ENCODE measurements at regions of chr1 and their contacts with region 1.

Region 1: GRCh38 chr1:1399187-1399871 is at the start of gene CCNL2:
- DNase-seq: peak; percentile 99 to 100 (median 99)
- ATAC-seq: peak; percentile 95 to 99 (median 96)
- H3K4me3 ChIP-seq: peak within 1 kb of the TSS; percentile 76 to 100 (median 98)
- H3K27ac ChIP-seq: peak within 1 kb of the TSS; percentile 78 to 97 (median 92)
- H3K4me1 ChIP-seq: peaks cover 5 to 53% (median 37%) of the 10 kb centered on the region in 12 donors
- H3K27me3 ChIP-seq: no peaks in the 10 kb centered on the region
- CTCF ChIP-seq: peak; percentile 35 to 79 (median 60)
- POLR2A ChIP-seq: peak in 1 of 2 donors; percentile 80
- total RNA-seq, gene CCNL2: 35.4 to 66.5 (median 50.7) TPM

Region 2: GRCh38 chr1:1150100-1150499 is 249.2 kb before region 1 on chr1:
- intact Hi-C with region 1: no loop called
- DNase-seq: no peak
- ATAC-seq: no peak
- H3K4me3 ChIP-seq: no peak overlapping the region
- H3K27ac ChIP-seq: no peak overlapping the region
- H3K4me1 ChIP-seq: no peaks in the 10 kb centered on the region
- H3K27me3 ChIP-seq: no peaks in the 10 kb centered on the region
- CTCF ChIP-seq: no peak
- POLR2A ChIP-seq: no peak

Region 3: DNA sequence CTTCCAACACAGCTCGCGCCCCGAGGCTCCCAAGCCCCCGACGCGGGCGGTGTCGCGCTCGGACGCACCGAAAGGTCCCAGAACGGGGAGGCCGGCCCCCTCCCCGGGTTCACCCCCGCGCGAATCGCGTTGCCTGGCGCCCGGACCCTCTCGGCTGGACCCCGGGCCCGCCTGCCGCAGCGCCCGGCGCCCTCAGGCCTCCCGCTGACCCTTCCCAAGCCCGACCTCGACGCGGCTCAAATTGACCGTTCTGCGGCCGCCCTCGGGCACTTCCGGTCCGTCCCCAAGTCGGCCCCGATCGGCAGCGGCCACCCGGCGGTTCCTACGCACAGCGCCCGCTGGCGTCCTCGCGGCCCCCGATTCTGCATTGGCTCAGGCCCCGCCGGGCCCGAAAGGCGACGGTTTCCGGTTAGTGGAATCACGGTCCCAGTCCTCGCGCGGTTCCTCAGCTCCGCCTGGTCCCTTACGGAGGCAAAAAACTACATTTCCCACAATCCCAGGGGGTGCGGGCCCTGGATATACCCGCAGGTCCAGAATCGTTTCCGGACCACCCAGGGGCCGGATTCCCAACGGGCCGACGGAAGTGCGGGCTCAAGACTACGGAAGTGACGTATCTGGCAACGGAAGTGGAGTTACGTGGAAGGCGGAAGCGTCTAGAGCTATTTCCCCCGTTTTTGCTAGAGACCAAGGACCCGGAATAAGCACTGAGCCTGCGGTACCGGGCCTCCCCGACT is 24.2 kb before region 1 on chr1 and contains the start of gene AURKAIP1:
- intact Hi-C with region 1: loop called in 1 of 10 experiments (anchors 1 kb)
- DNase-seq: peak; percentile 98 to 99 (median 99)
- ATAC-seq: peak; percentile 95 to 98 (median 96)
- H3K4me3 ChIP-seq: peak within 1 kb of the TSS; percentile 78 to 100 (median 94)
- H3K27ac ChIP-seq: peak within 1 kb of the TSS; percentile 82 to 99 (median 96)
- H3K4me1 ChIP-seq: peaks cover 10 to 42% (median 33%) of the 10 kb centered on the region in 12 donors
- H3K27me3 ChIP-seq: no peaks in the 10 kb centered on the region
- CTCF ChIP-seq: peak in 6 of 12 donors; percentile 17 to 62 (median 34)
- POLR2A ChIP-seq: peak; percentile 12 to 76
- total RNA-seq, gene AURKAIP1: 157 to 273 (median 188) TPM

Region 4: DNA sequence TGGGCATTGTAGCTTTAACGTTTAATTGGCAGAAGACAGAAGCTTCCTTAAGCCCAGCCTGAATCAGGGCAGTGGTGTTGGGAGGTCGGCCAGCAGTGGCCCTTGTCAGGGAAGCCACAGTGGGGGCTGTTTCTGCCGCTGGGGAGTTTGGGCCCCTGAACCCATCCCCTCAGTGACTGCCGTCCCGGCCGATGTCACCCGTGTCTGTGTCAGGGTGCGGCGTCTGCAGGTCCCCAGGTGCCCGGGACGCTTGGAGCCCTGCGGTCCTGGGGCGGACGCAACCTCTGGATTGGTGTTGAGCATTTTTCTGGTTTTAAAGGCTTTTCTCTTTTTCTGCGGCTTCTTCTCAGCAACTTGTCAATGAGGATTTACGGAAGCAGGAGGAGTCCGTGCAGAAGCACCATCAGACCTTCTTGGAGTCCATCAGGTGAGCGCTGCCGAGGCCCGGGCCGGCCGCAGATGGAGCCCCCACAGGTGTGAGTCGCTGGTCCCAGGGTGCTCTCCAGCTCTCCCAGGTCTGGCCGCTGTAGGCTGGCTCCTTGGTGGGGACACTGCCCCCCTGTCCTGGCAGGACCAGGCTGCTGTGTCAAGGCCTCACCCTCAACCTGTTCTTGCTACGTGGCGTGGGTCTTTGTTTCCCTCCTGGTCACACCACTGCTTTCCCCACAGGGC is 52.5 kb after region 1 on chr1:
- intact Hi-C with region 1: no loop called
- DNase-seq: no peak
- ATAC-seq: peak in 1 of 4 donors; percentile 23
- H3K4me3 ChIP-seq: no peak overlapping the region
- H3K27ac ChIP-seq: no peak overlapping the region
- H3K4me1 ChIP-seq: no peaks in the 10 kb centered on the region
- H3K27me3 ChIP-seq: no peaks in the 10 kb centered on the region
- CTCF ChIP-seq: no peak
- POLR2A ChIP-seq: no peak